PC-3 (cell line): ENCODE measurements at regions of chr3 and their contacts with region 1.

Region 1: GRCh38 chr3:146277953-146278631 is 27.2 kb upstream of the PLSCR4 start:
- DNase-seq: peak; percentile 85
- ATAC-seq: peak; percentile 97
- H3K4me3 ChIP-seq: no peak overlapping the region
- H3K27ac ChIP-seq: peak overlapping the region; percentile 28
- H3K4me1 ChIP-seq: peaks cover 10% of the 10 kb centered on the region
- H3K27me3 ChIP-seq: no peaks in the 10 kb centered on the region
- CTCF ChIP-seq: no peak

Region 2: DNA sequence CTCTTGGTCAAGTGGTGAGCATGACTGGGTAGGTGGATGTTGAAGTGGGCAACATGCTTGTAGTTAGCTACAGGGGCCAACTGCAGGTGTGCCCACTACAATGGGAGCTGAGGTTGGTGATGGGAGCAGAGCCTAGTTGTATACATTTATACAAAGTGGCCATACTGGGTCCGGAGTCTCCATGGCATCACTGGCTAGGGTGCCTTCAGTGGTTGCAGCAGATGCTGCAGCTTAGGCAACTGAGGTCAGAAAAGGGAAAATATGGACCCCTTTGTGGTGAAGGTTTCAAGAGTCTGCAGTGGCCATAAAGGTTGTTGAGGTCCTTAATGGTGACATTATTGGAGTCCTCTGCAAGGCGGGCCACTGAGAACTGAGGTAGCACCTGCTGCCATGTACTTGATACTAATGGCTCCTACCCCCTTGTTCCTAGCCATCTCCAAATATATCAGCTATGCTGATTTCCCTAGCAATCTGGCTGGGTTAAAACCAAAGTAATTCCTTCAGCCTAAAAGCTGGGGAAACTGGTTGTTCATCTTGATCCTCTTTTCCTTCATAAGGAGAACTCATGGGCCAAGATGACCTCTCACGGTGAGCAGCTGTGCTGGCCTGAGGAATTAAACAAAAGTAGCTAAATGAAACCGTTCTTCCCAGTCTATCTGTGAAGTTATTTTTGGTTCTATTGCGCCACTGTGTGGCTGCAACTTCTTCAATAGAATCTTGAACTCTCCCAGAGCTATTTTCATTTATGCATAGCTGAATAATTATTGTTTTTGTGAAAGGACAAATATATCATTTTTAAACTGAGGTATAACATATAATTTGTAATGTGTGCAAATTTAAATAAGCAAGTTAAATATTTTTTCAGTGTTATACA is 48.8 kb after region 1 on chr3:
- CTCF ChIA-PET with region 1: interaction called, 3 read pairs
- POLR2A ChIA-PET with region 1: no interaction called
- intact Hi-C with region 1: loop called (anchors 1 kb)
- DNase-seq: peak; percentile 84
- ATAC-seq: peak; percentile 96
- H3K4me3 ChIP-seq: no peak overlapping the region
- H3K27ac ChIP-seq: no peak overlapping the region
- H3K4me1 ChIP-seq: no peaks in the 10 kb centered on the region
- H3K27me3 ChIP-seq: no peaks in the 10 kb centered on the region
- CTCF ChIP-seq: peak; percentile 91